WTC11 (cell line): ENCODE measurements at regions of chrX and their contacts with region 1.

Region 1: DNA sequence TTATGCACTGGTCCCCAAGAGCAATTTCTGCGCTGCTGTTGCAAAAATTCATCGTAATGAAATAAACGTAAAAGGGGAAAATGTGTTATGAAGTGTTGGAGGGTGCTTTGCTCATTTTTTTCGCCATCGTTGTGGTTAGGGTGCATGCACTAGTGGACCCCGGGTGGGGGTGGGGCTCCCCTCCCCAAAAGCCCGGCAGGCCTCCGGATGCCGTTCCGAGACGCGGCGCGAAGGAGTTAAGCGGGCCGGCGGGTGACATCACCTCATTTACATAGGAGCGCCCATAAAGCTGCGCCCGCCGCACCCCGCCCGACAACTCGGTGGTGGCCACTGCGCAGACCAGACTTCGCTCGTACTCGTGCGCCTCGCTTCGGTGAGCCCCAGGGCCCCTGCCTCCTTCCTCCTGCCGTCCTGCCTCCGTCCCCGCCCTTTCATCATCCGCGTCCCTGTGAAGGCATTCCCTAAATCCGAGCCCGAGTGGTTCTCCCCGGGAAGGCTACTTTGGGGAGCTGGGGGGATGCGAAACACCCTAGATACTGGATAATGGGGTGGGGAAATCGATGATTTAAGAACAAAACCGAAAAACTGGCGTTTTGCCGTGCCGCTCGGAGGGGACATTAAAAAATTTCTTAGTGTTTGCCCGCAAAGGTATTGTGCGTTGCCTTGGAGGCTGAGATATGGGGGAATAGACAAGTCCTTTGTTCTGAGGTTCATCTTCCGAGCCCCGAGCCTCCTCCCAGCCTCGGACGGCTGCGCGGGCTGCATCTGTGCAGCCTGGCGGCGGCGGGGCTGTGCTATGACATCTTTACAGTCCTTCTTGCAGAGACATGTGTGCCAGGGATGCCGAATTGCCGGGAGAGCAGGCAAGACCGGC is at the start of gene TMSB4X:
- DNase-seq: peak; percentile 79
- ATAC-seq: peak; percentile 58
- H3K4me3 Mint-ChIP-seq: peak within 1 kb of the TSS; percentile 93
- H3K27ac Mint-ChIP-seq: peak within 1 kb of the TSS; percentile 98
- H3K4me1 Mint-ChIP-seq: peaks cover 65% of the 10 kb centered on the region
- H3K27me3 Mint-ChIP-seq: no peaks in the 10 kb centered on the region
- CTCF ChIP-seq: no peak
- total RNA-seq, gene TMSB4X: 2,375 to 2,595 TPM (median 2,468 TPM) in 3 replicates

Region 2: GRCh38 chrX:12946838-12947544 is 28.0 kb before region 1 on chrX:
- CTCF ChIA-PET with region 1: interaction called, 11 read pairs
- POLR2A ChIA-PET with region 1: interaction called, 6 read pairs
- DNase-seq: peak; percentile 79
- ATAC-seq: peak; percentile 82
- H3K4me3 Mint-ChIP-seq: no peak overlapping the region
- H3K27ac Mint-ChIP-seq: peak overlapping the region; percentile 89
- H3K4me1 Mint-ChIP-seq: peaks cover 31% of the 10 kb centered on the region
- H3K27me3 Mint-ChIP-seq: no peaks in the 10 kb centered on the region
- CTCF ChIP-seq: peak; percentile 87

Region 3: GRCh38 chrX:13198056-13198761 is 223.2 kb after region 1 on chrX:
- CTCF ChIA-PET with region 1: no interaction called
- POLR2A ChIA-PET with region 1: interaction called, 11 read pairs
- DNase-seq: peak; percentile 26
- ATAC-seq: peak; percentile 73
- H3K4me3 Mint-ChIP-seq: peak overlapping the region; percentile 43
- H3K27ac Mint-ChIP-seq: peak overlapping the region; percentile 99
- H3K4me1 Mint-ChIP-seq: peaks cover 56% of the 10 kb centered on the region
- H3K27me3 Mint-ChIP-seq: no peaks in the 10 kb centered on the region
- CTCF ChIP-seq: no peak

Region 4: DNA sequence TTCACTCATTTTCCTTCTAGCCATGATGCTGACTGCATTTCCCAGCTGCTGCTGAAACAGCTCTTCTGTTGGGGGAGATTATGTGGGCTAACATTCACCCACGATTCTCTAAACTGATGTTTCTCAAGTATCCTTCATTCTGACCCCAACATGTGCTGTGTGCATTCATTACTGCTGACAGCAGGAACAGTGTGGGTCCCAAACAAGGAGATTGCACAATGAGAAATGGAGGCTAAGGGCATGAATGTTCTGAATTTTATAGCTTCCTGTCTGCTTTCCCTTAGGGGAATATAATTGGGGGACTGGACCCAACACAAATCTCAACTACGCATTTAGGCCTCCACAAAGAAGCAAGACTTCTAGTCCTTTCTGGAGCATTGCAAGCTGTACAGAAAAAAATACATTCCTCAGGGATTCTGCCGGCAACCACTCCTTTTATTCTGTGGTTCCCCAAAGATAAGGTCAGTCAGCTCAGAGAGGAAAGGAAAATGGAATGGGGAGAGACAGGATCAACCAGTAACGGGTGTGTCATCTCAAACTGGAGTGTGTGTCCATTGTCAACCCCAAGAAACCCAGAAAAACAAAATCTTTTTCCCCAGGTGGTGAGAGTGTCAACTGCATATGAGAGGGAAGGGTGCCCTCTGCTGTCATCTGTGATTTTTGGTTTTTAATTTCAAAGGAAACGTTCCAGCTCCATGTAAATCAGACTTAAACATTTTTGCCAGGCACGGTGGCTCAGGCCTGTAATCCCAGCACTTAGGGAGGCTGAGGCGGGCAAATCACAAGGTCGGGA is 512.9 kb after region 1 on chrX:
- CTCF ChIA-PET with region 1: interaction called, 11 read pairs
- POLR2A ChIA-PET with region 1: interaction called, 4 read pairs
- DNase-seq: peak; percentile 9
- ATAC-seq: peak; percentile 60
- H3K4me3 Mint-ChIP-seq: no peak overlapping the region
- H3K27ac Mint-ChIP-seq: peak overlapping the region; percentile 68; the same call in 1 of the 2 replicates
- H3K4me1 Mint-ChIP-seq: peaks cover 18% of the 10 kb centered on the region
- H3K27me3 Mint-ChIP-seq: no peaks in the 10 kb centered on the region
- CTCF ChIP-seq: 0 out of 2 replicates have a peak, but pooled peaks have one; percentile 17